Astrocyte of the cerebellum (primary cell): ENCODE measurements at regions of chr15 and their contacts with region 1.

Region 1: GRCh38 chr15:76752549-76752948 is 152.6 kb downstream of the SCAPER start:
- DNase-seq: no peak
- H3K4me3 ChIP-seq: no peak overlapping the region
- CTCF ChIP-seq: no peak

Region 2: DNA sequence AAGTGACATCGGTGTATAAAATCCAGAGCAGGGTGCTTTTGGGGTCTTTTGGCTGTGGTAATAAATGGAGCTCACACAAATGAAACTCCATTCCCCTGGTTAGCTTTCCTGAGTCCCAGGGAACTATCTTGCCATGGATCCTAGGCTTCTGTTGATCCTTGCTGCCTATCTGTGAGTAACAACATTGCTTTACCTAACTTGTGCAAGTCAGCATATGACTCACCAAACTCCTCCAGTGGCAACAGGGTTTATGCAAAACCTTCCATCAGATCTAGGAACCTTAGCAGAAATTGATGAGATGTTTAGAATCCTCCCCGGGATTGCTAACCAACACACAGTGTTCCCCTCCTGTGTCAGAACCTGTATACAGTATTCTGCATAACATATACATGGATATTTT is 47.2 kb after region 1 on chr15:
- in situ Hi-C with region 1: loop called (anchors 10 kb)
- DNase-seq: no peak
- H3K4me3 ChIP-seq: no peak overlapping the region
- CTCF ChIP-seq: no peak